ENCODE measurements at regions of chr3 and their contacts with region 1.

Region 1: GRCh38 chr3:178385280-178385952 is 150.8 kb upstream of the KCNMB2 start:
- DNase-seq: no peak
- ATAC-seq: peak in 3 of 4 donors; percentile 64 to 74 (median 72)
- H3K4me3 ChIP-seq: peak overlapping the region in 6 of 12 donors; percentile 1 to 34 (median 6)
- H3K27ac ChIP-seq: peak overlapping the region in 8 of 12 donors; percentile 20 to 75 (median 56)
- H3K4me1 ChIP-seq: peaks cover 0 to 41% (median 22%) of the 10 kb centered on the region in 12 donors
- H3K27me3 ChIP-seq: no peaks in the 10 kb centered on the region
- CTCF ChIP-seq: peak; percentile 64 to 94 (median 84)
- POLR2A ChIP-seq: no peak

Region 2: DNA sequence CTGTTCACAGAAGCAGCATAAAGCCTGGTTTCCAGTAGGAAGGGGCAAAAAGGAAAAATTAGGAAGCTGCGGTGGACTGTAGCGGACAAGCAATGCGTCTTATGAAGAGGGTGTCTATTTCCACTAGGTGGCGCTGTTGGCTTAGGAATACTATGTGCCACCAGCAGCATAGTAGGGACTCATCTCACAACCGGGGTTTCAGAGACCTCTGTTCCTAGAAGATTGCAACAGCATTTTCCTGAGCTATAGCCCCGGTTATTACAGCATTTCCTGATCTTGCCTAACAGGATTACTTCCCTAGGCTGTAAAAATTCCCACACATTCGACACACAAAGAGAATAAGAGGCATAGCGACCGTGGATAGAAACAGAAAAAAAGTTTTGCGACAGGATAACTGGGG is 1871.1 kb before region 1 on chr3:
- intact Hi-C with region 1: loop called in 3 of 10 experiments (anchors 5 to 10 kb)
- DNase-seq: peak in 1 of 5 donors; percentile 8
- ATAC-seq: peak in 1 of 4 donors; percentile 28
- H3K4me3 ChIP-seq: no peak overlapping the region
- H3K27ac ChIP-seq: no peak overlapping the region
- H3K4me1 ChIP-seq: no peaks in the 10 kb centered on the region
- H3K27me3 ChIP-seq: no peaks in the 10 kb centered on the region
- CTCF ChIP-seq: peak in 11 of 12 donors; percentile 33 to 68 (median 53)
- POLR2A ChIP-seq: no peak

Region 3: GRCh38 chr3:176939022-176939817 is 1446.2 kb before region 1 on chr3:
- intact Hi-C with region 1: loop called in 1 of 10 experiments (anchors 10 kb)
- DNase-seq: peak in 2 of 5 donors; percentile 22 to 33
- ATAC-seq: peak; percentile 32 to 85 (median 79)
- H3K4me3 ChIP-seq: no peak overlapping the region
- H3K27ac ChIP-seq: no peak overlapping the region
- H3K4me1 ChIP-seq: peaks cover 0 to 5% (median 0%) of the 10 kb centered on the region in 12 donors
- H3K27me3 ChIP-seq: no peaks in the 10 kb centered on the region
- CTCF ChIP-seq: peak; percentile 55 to 87 (median 74)
- POLR2A ChIP-seq: no peak

Region 4: GRCh38 chr3:177050501-177051237 is 1334.7 kb before region 1 on chr3:
- intact Hi-C with region 1: loop called in 9 of 10 experiments (anchors 5 to 10 kb)
- DNase-seq: no peak
- ATAC-seq: peak; percentile 53 to 74 (median 60)
- H3K4me3 ChIP-seq: no peak overlapping the region
- H3K27ac ChIP-seq: no peak overlapping the region
- H3K4me1 ChIP-seq: peaks cover 0 to 22% (median 14%) of the 10 kb centered on the region in 12 donors
- H3K27me3 ChIP-seq: no peaks in the 10 kb centered on the region
- CTCF ChIP-seq: peak; percentile 35 to 73 (median 63)
- POLR2A ChIP-seq: no peak

Region 5: DNA sequence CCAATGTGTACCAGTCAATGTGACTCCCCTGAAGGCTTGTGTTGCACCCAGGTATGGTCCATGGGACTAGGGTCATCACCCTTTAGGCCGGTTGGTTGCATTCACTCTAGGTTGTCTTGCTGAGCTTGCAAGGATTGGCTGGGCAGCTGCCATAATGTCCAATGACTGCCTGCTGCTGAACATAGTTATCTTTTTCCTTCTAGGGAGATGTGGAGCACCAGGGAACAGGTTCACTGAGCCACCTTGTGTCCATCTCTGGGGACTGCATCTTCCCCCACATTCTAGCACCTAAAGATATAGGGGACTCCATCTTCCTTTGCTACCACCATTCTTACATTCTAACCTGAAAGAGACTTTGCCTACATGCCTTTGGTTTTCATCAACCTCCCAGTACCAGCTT is 607.7 kb before region 1 on chr3:
- intact Hi-C with region 1: loop called in 2 of 10 experiments (anchors 10 kb)
- DNase-seq: peak in 4 of 5 donors; percentile 25 to 52 (median 36)
- ATAC-seq: peak in 2 of 4 donors; percentile 26 to 47
- H3K4me3 ChIP-seq: no peak overlapping the region
- H3K27ac ChIP-seq: no peak overlapping the region
- H3K4me1 ChIP-seq: peaks cover 0 to 67% (median 29%) of the 10 kb centered on the region in 12 donors
- H3K27me3 ChIP-seq: no peaks in the 10 kb centered on the region
- CTCF ChIP-seq: peak; percentile 37 to 65 (median 54)
- POLR2A ChIP-seq: no peak